B cell (primary cell): ENCODE measurements at regions of chr6 and their contacts with region 1.

Region 1: GRCh38 chr6:75284632-75285286 is at the start of gene TMEM30A:
- DNase-seq: peak; percentile 98
- ATAC-seq: peak; percentile 96
- H3K4me3 ChIP-seq: peak within 1 kb of the TSS; percentile 76 to 96 (median 92)
- H3K4me3 Mint-ChIP-seq: no peak within 1 kb of the TSS
- H3K27ac ChIP-seq: peak within 1 kb of the TSS; percentile 78 to 94
- H3K27ac Mint-ChIP-seq: no peak within 1 kb of the TSS
- H3K4me1 ChIP-seq: peaks cover 15 to 28% of the 10 kb centered on the region in 2 donors
- H3K4me1 Mint-ChIP-seq: peaks cover 23% of the 10 kb centered on the region
- H3K27me3 ChIP-seq: no peaks in the 10 kb centered on the region
- H3K27me3 Mint-ChIP-seq: no peaks in the 10 kb centered on the region
- CTCF ChIP-seq: no peak
- total RNA-seq, gene TMEM30A: 53.9 and 55.3 TPM in 2 replicates

Region 2: DNA sequence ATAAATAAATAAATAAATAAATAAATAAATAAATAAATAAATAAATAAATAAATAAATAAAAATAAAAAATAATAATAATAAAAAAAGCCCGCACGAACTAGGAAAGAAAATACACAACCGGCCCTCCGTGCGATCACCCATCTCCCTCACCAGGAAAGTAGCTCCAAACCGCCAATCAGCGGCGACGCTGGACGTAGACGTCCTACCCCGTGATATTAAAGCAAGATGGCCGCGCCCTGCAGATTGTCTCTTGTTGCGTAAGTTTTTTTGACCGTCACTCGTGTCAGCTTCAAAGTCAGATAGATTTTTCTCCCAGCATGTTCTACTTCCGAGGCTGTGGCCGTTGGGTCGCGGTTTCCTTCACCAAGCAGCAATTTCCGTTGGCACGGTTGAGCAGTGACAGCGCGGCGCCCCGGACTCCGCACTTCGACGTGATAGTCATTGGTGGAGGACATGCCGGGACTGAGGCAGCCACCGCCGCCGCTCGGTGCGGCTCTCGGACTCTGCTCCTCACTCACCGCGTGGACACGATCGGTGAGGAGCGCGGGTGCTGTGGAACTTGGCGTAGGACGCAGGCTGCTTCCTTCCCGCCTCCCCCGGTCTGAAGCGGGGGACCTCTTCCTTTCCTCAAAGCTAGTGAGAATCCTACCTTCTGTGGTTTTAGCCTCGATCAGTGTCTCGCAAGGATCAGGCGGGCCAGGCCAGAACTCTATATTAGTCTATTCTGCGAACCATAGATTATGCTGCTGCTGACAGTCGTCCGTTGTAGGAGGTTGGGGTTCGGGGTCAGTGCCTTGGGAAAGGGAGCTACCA is 1823.0 kb before region 1 on chr6 and contains the start of gene MTO1:
- CTCF ChIA-PET with region 1: no interaction called
- POLR2A ChIA-PET with region 1: no interaction called
- intact Hi-C with region 1: loop called (anchors 10 kb)
- DNase-seq: peak; percentile 91
- ATAC-seq: peak; percentile 94
- H3K4me3 ChIP-seq: peak within 1 kb of the TSS; percentile 66 to 99 (median 78)
- H3K4me3 Mint-ChIP-seq: peak within 1 kb of the TSS; percentile 100
- H3K27ac ChIP-seq: peak within 1 kb of the TSS; percentile 90 to 96
- H3K27ac Mint-ChIP-seq: peak within 1 kb of the TSS; percentile 97
- H3K4me1 ChIP-seq: peaks cover 12 to 31% of the 10 kb centered on the region in 2 donors
- H3K4me1 Mint-ChIP-seq: peaks cover 29% of the 10 kb centered on the region
- H3K27me3 ChIP-seq: no peaks in the 10 kb centered on the region
- H3K27me3 Mint-ChIP-seq: no peaks in the 10 kb centered on the region
- CTCF ChIP-seq: no peak
- total RNA-seq, gene MTO1: 79.5 and 84.4 TPM in 2 replicates

Region 3: GRCh38 chr6:75243333-75244062 is 41.3 kb before region 1 on chr6 and contains the start of gene COX7A2:
- CTCF ChIA-PET with region 1: interaction called, 7 read pairs
- POLR2A ChIA-PET with region 1: interaction called, 11 read pairs
- intact Hi-C with region 1: loop called (anchors 1 kb)
- DNase-seq: peak; percentile 92
- ATAC-seq: peak; percentile 98
- H3K4me3 ChIP-seq: peak within 1 kb of the TSS; percentile 85 to 98 (median 90)
- H3K4me3 Mint-ChIP-seq: peak within 1 kb of the TSS; percentile 99
- H3K27ac ChIP-seq: peak within 1 kb of the TSS; percentile 92 to 97
- H3K27ac Mint-ChIP-seq: peak within 1 kb of the TSS; percentile 98
- H3K4me1 ChIP-seq: peaks cover 5 to 10% of the 10 kb centered on the region in 2 donors
- H3K4me1 Mint-ChIP-seq: peaks cover 24% of the 10 kb centered on the region
- H3K27me3 ChIP-seq: peaks cover 0 to 14% (median 4%) of the 10 kb centered on the region in 4 experiments
- H3K27me3 Mint-ChIP-seq: peaks cover 16% of the 10 kb centered on the region
- CTCF ChIP-seq: no peak
- total RNA-seq, gene COX7A2: 157 and 160 TPM in 2 replicates

Region 4: DNA sequence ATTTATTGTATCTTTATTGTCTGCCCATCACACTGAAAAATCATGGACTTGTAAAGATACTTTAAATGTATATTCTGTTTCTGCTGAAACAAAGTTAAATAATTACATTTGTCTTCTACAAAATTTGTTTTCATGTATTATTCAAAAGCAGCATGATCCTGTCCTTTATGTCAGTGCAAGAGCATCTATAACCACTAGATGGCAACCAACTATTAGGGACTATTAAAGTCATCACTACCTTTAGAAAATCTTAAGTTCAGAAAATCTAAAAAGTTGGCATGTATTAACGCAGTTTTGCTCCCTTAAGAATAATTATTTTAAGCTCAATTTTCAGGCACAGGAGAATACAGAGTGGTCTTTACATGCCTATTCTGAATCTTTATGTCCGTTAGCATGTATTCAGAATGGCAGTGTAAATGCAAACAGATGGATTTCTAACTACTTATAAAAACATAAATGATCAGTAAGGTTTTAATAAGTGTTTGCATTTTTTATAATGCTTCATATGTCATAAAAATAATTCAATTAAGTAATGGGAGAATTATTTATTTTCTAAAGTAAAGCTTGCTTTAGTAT is 18.0 kb before region 1 on chr6:
- CTCF ChIA-PET with region 1: interaction called, 7 read pairs
- POLR2A ChIA-PET with region 1: no interaction called
- intact Hi-C with region 1: loop called (anchors 2 kb)
- DNase-seq: peak; percentile 58
- ATAC-seq: peak; percentile 58
- H3K4me3 ChIP-seq: no peak overlapping the region
- H3K4me3 Mint-ChIP-seq: no peak overlapping the region
- H3K27ac ChIP-seq: no peak overlapping the region
- H3K27ac Mint-ChIP-seq: no peak overlapping the region
- H3K4me1 ChIP-seq: no peaks in the 10 kb centered on the region
- H3K4me1 Mint-ChIP-seq: peaks cover 10% of the 10 kb centered on the region
- H3K27me3 ChIP-seq: no peaks in the 10 kb centered on the region
- H3K27me3 Mint-ChIP-seq: no peaks in the 10 kb centered on the region
- CTCF ChIP-seq: peak; percentile 95

Region 5: GRCh38 chr6:75296811-75297779 is 12.3 kb after region 1 on chr6:
- CTCF ChIA-PET with region 1: interaction called, 8 read pairs
- POLR2A ChIA-PET with region 1: no interaction called
- intact Hi-C with region 1: loop called (anchors 1 kb)
- DNase-seq: peak; percentile 68
- ATAC-seq: peak; percentile 36
- H3K4me3 ChIP-seq: no peak overlapping the region
- H3K4me3 Mint-ChIP-seq: no peak overlapping the region
- H3K27ac ChIP-seq: no peak overlapping the region
- H3K27ac Mint-ChIP-seq: no peak overlapping the region
- H3K4me1 ChIP-seq: no peaks in the 10 kb centered on the region
- H3K4me1 Mint-ChIP-seq: no peaks in the 10 kb centered on the region
- H3K27me3 ChIP-seq: no peaks in the 10 kb centered on the region
- H3K27me3 Mint-ChIP-seq: no peaks in the 10 kb centered on the region
- CTCF ChIP-seq: peak; percentile 90

Region 6: DNA sequence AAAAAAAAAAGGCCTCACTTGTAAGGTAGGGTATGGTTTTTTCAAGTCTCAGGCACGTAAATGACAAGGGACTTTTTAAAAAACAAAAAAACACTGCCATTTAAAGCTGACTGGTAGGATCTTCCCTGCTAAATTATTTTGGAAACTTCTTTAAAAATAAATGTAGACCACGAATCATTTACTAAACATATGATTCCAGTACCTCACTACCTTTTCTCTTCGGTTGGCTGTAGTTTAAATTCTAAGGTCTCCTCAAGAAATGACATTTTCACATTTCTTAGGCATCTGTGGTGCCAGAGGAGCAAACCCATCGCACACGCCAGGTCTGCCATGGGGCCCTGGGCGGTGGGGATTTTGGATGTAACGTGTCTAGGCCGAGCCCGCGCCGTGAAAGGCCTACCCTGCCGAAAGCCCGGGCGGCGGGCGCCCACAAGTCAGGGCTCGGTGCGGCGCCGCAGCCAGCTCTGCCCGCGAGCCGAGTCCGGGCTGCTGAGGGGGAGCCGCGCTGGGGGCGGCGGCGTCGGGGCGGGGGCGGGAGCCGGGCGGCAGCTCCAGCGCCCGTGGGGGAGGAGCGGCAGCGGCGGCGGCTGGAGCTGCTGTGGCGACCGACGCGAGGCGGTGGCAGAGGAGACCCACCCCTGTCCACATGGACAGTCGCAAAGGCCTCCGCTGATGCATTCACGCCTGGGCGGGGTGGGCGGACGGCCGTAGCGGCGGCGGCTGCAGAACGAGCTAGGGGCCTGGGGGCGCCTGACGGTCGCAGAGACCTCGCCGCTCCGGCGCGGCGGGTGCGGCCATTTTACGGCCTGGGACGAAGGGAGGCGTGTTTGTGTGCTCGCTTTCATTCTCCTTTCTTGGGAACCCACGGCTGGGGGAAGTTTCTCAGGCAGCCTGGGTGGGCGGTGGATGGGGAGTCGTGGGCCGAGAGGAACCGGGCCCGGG is 316.8 kb after region 1 on chr6 and contains the start of gene SENP6:
- CTCF ChIA-PET with region 1: no interaction called
- POLR2A ChIA-PET with region 1: interaction called, 3 read pairs
- intact Hi-C with region 1: loop called (anchors 1 kb)
- DNase-seq: peak; percentile 93
- ATAC-seq: peak; percentile 80
- H3K4me3 ChIP-seq: peak within 1 kb of the TSS; percentile 84 to 99 (median 92)
- H3K4me3 Mint-ChIP-seq: peak within 1 kb of the TSS; percentile 94
- H3K27ac ChIP-seq: peak within 1 kb of the TSS; percentile 92 to 97
- H3K27ac Mint-ChIP-seq: peak within 1 kb of the TSS; percentile 98
- H3K4me1 ChIP-seq: peaks cover 36 to 44% of the 10 kb centered on the region in 2 donors
- H3K4me1 Mint-ChIP-seq: peaks cover 62% of the 10 kb centered on the region
- H3K27me3 ChIP-seq: no peaks in the 10 kb centered on the region
- H3K27me3 Mint-ChIP-seq: no peaks in the 10 kb centered on the region
- CTCF ChIP-seq: no peak
- total RNA-seq, gene SENP6: 161 and 178 TPM in 2 replicates